Ascending aorta (tissue), 2 donors: ENCODE measurements at regions of chr13 and their contacts with region 1.

Region 1: DNA sequence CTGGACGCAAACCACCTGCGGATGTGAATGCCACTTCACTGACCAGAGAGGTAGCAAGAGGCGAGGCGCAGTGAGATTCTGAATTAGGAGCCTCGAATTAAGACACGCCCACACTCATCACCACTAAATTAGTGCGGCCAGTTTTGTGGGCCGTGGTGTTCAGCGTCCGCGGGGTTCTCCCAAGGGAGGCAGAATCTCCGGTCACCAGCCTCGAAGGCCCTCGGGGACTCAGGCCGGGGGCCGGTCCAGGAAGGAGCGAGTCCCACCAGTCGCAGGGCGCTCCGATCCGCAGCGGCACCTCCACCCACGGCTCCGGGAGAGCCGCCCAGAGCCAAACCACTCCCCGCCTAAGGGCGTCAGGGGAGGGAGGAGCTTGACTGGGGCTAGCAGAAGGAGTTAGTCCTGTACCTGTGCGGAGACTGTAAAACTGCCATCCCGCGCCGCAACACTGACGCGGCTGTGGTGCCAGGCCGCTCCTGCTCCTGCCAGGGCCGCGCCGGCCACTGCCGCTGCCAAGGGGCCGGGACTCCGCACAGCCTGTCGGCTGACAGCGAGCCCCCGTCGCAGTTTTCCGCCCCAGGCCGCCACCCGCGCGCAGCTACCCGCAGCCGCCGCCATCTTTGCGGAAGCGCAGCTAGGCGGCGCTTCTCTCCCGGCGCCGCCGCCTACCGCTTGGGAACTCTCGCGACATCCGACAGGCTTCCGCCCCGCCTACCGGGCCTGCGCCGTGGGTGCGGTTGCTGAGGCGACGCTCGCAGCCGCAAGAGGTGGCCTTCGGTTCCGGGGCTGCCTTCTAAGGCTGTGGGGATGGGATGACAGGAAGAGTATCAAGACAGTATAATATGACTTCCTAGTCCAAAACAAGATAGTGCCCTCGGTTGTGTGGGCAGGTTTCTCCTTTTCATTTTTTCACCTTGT is at the start of gene MICU2:
- DNase-seq: peak; percentile 71 to 95
- H3K4me3 ChIP-seq: peak within 1 kb of the TSS; percentile 73 to 74
- H3K27ac ChIP-seq: peak within 1 kb of the TSS; percentile 79 to 94
- H3K4me1 ChIP-seq: peaks cover 0 to 5% of the 10 kb centered on the region in 2 donors
- H3K27me3 ChIP-seq: no peaks in the 10 kb centered on the region
- CTCF ChIP-seq: peak in 1 of 3 experiments; percentile 37
- total RNA-seq, gene MICU2: 41.5 TPM

Region 2: DNA sequence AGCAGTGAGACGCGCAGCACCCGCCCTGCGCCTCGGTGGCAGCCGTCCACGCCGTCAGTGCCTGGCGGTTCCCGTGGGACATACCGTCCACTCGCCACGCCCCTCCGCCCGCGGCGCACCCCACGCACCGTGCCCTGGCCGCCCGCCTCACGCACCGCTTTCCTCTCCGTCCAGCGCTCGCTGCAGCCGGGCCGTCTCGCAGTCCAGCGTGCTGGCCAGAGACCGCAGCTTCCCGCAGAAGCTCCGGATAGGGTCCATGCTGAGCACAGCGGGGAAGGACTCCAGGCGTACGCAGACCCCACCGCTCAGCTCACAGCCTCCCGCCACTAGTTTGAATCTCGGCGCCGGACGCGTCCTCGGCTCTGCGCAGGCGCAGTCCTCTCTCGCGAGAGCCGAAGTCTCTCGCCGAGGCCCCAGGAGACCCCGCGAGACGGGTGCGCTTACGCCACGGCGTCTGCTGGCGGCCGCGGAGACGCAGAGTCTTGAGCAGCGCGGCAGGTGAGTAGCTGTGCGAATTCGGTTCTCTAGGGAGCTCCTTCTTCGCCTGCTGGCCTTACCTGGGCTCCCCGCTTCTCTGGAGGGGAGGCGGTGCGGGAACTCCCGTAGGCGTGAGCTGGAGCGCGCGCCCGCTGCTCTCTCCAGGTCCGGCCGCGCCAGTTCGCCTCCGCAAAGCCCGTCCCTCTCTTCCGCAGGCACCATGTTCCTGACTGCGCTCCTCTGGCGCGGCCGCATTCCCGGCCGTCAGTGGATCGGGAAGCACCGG is 427.4 kb before region 1 on chr13 and contains the starts of genes MRPL57 and SKA3:
- intact Hi-C with region 1: loop called (anchors 5 kb)
- DNase-seq: peak; percentile 64 to 93
- H3K4me3 ChIP-seq: peak within 1 kb of the TSS; percentile 82 to 89
- H3K27ac ChIP-seq: peak within 1 kb of the TSS; percentile 94 to 95
- H3K4me1 ChIP-seq: peaks cover 0 to 6% of the 10 kb centered on the region in 2 donors
- H3K27me3 ChIP-seq: no peaks in the 10 kb centered on the region
- CTCF ChIP-seq: peak; percentile 9 to 45 (median 19)
- total RNA-seq, gene MRPL57: 36.7 TPM
- total RNA-seq, gene SKA3: not detected

Region 3: GRCh38 chr13:21670883-21671619 is 67.3 kb after region 1 on chr13 and contains the start of gene FGF9:
- intact Hi-C with region 1: loop called (anchors 5 kb)
- DNase-seq: peak in 1 of 2 donors; percentile 84
- H3K4me3 ChIP-seq: peak within 1 kb of the TSS; percentile 67 to 83
- H3K27ac ChIP-seq: peak within 1 kb of the TSS in 1 of 2 donors; percentile 39
- H3K4me1 ChIP-seq: peaks cover 12 to 41% of the 10 kb centered on the region in 2 donors
- H3K27me3 ChIP-seq: peaks cover 5% of the 10 kb centered on the region
- CTCF ChIP-seq: no peak
- total RNA-seq, gene FGF9: not detected